ENCODE measurements at regions of chr11 and their contacts with region 1.

Region 1: DNA sequence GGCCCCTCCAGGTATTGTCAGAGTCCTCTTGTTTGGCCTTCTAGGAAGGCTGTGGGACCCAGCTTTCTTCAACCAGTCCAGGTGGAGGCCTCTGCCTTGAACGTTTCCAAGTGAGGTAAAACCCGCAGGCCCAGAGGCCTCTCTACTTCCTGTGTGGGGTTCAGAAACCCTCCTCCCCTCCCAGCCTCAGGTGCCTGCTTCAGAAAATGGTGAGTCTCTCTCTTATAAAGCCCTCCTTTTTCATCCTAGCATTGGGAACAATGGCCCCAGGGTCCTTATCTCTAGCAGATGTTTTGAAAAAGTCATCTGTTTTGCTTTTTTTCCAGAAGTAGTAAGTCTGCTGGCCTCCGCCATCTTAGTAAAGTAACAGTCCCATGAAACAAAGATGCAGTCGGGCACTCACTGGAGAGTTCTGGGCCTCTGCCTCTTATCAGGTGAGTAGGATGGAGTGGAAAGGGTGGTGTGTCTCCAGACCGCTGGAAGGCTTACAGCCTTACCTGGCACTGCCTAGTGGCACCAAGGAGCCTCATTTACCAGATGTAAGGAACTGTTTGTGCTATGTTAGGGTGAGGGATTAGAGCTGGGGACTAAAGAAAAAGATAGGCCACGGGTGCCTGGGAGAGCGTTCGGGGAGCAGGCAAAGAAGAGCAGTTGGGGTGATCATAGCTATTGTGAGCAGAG is at the start of gene CD3E:
- DNase-seq: peak; percentile 88
- ATAC-seq: peak; percentile 77
- H3K4me3 Mint-ChIP-seq: peak within 1 kb of the TSS; percentile 96
- H3K27ac Mint-ChIP-seq: peak within 1 kb of the TSS; percentile 99
- H3K4me1 Mint-ChIP-seq: peaks cover 54% of the 10 kb centered on the region
- H3K27me3 Mint-ChIP-seq: no peaks in the 10 kb centered on the region
- CTCF ChIP-seq: no peak
- total RNA-seq, gene CD3E: 372 to 387 TPM

Region 2: DNA sequence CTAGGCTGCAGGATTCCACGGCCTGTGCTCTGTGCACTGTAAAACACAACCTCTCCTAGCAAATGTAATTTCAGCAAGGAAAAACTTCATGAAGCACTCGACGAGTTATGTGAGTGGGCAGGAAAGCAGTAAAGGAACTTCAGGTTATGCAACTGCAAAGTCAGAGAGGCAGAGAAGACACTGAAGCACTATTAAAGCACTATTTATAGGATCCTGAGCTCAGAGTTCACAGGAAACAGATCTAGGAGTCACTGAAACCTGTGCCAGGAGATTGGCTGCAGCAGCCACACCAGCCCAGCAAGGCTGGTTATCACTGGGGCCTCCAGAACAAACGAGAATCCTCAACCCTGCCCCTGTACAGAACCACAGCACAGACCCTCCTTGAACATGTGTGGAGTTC is 220.5 kb before region 1 on chr11:
- CTCF ChIA-PET with region 1: no interaction called
- POLR2A ChIA-PET with region 1: no interaction called
- intact Hi-C with region 1: no loop called
- DNase-seq: no peak
- ATAC-seq: no peak
- H3K4me3 Mint-ChIP-seq: no peak overlapping the region
- H3K27ac Mint-ChIP-seq: no peak overlapping the region
- H3K4me1 Mint-ChIP-seq: no peaks in the 10 kb centered on the region
- H3K27me3 Mint-ChIP-seq: no peaks in the 10 kb centered on the region
- CTCF ChIP-seq: no peak

Region 3: GRCh38 chr11:118227865-118228785 is 76.6 kb before region 1 on chr11:
- CTCF ChIA-PET with region 1: interaction called, 3 read pairs
- POLR2A ChIA-PET with region 1: interaction called, 73 read pairs
- intact Hi-C with region 1: no loop called
- DNase-seq: peak; percentile 60
- ATAC-seq: peak; percentile 2
- H3K4me3 Mint-ChIP-seq: peak overlapping the region; percentile 52
- H3K27ac Mint-ChIP-seq: no peak overlapping the region
- H3K4me1 Mint-ChIP-seq: peaks cover 39% of the 10 kb centered on the region
- H3K27me3 Mint-ChIP-seq: no peaks in the 10 kb centered on the region
- CTCF ChIP-seq: no peak

Region 4: GRCh38 chr11:118258410-118258809 is 46.3 kb before region 1 on chr11:
- CTCF ChIA-PET with region 1: interaction called, 86 read pairs
- POLR2A ChIA-PET with region 1: interaction called, 15 read pairs
- intact Hi-C with region 1: no loop called
- DNase-seq: peak; percentile 50
- ATAC-seq: peak; percentile 76
- H3K4me3 Mint-ChIP-seq: no peak overlapping the region
- H3K27ac Mint-ChIP-seq: no peak overlapping the region
- H3K4me1 Mint-ChIP-seq: peaks cover 62% of the 10 kb centered on the region
- H3K27me3 Mint-ChIP-seq: no peaks in the 10 kb centered on the region
- CTCF ChIP-seq: peak; percentile 58

Region 5: GRCh38 chr11:118290923-118291322 is 13.8 kb before region 1 on chr11:
- CTCF ChIA-PET with region 1: interaction called, 54 read pairs
- POLR2A ChIA-PET with region 1: interaction called, 13 read pairs
- intact Hi-C with region 1: no loop called
- DNase-seq: peak; percentile 74
- ATAC-seq: peak; percentile 71
- H3K4me3 Mint-ChIP-seq: no peak overlapping the region
- H3K27ac Mint-ChIP-seq: no peak overlapping the region
- H3K4me1 Mint-ChIP-seq: peaks cover 32% of the 10 kb centered on the region
- H3K27me3 Mint-ChIP-seq: no peaks in the 10 kb centered on the region
- CTCF ChIP-seq: peak; percentile 48

Region 6: DNA sequence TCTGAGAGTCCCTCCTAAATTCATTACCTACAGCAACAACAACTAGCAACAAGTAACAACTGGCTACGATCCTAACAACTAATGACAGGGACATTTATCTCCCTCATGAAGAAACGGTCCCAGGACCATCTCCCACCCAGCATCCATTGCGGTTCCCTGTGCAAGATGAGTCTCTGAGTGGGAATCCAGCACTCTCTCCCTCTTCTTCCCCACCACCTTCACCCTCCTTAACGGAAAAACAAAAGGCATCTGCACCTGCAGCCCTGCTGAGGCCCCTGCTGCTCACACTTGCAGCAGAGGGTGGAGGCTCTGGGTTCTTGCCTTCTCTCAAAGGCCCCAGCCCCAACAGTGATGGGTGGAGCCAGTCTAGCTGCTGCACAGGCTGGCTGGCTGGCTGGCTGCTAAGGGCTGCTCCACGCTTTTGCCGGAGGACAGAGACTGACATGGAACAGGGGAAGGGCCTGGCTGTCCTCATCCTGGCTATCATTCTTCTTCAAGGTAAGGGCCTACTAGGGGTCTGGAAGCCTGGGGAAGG is 39.3 kb after region 1 on chr11 and contains the start of gene CD3G:
- CTCF ChIA-PET with region 1: interaction called, 13 read pairs
- POLR2A ChIA-PET with region 1: no interaction called
- intact Hi-C with region 1: loop called (anchors 2 kb)
- DNase-seq: peak; percentile 85
- ATAC-seq: peak; percentile 67
- H3K4me3 Mint-ChIP-seq: peak within 1 kb of the TSS; percentile 81
- H3K27ac Mint-ChIP-seq: peak within 1 kb of the TSS; percentile 96
- H3K4me1 Mint-ChIP-seq: peaks cover 43% of the 10 kb centered on the region
- H3K27me3 Mint-ChIP-seq: no peaks in the 10 kb centered on the region
- CTCF ChIP-seq: no peak
- total RNA-seq, gene CD3G: 116 to 118 TPM

Region 7: GRCh38 chr11:118514103-118514502 is 209.4 kb after region 1 on chr11:
- CTCF ChIA-PET with region 1: no interaction called
- POLR2A ChIA-PET with region 1: no interaction called
- intact Hi-C with region 1: no loop called
- DNase-seq: no peak
- ATAC-seq: peak; percentile 13
- H3K4me3 Mint-ChIP-seq: no peak overlapping the region
- H3K27ac Mint-ChIP-seq: peak overlapping the region; percentile 60
- H3K4me1 Mint-ChIP-seq: peaks cover 5% of the 10 kb centered on the region
- H3K27me3 Mint-ChIP-seq: no peaks in the 10 kb centered on the region
- CTCF ChIP-seq: no peak

Measured in activated CD8-positive, alpha-beta T cell treated with anti-CD3 and anti-CD28 coated beads for 36 hours (primary cell).